ENCODE measurements at regions of chr1 and their contacts with region 1.

Region 1: GRCh38 chr1:12434174-12434573 is 183.8 kb downstream of the DHRS3 start:
- DNase-seq: peak; percentile 93
- ATAC-seq: peak; percentile 21
- H3K4me3 Mint-ChIP-seq: peak overlapping the region; percentile 65
- H3K27ac Mint-ChIP-seq: peak overlapping the region; percentile 96
- H3K4me1 Mint-ChIP-seq: peaks cover 87% of the 10 kb centered on the region
- H3K27me3 Mint-ChIP-seq: peaks cover 2% of the 10 kb centered on the region
- CTCF ChIP-seq: no peak

Region 2: GRCh38 chr1:12415038-12415466 is 19.1 kb before region 1 on chr1:
- CTCF ChIA-PET with region 1: interaction called, 5 read pairs
- POLR2A ChIA-PET with region 1: interaction called, 10 read pairs
- intact Hi-C with region 1: no loop called
- DNase-seq: no peak
- ATAC-seq: peak; percentile 80
- H3K4me3 Mint-ChIP-seq: no peak overlapping the region
- H3K27ac Mint-ChIP-seq: peak overlapping the region; percentile 86
- H3K4me1 Mint-ChIP-seq: peaks cover 42% of the 10 kb centered on the region
- H3K27me3 Mint-ChIP-seq: no peaks in the 10 kb centered on the region
- CTCF ChIP-seq: no peak

Region 3: DNA sequence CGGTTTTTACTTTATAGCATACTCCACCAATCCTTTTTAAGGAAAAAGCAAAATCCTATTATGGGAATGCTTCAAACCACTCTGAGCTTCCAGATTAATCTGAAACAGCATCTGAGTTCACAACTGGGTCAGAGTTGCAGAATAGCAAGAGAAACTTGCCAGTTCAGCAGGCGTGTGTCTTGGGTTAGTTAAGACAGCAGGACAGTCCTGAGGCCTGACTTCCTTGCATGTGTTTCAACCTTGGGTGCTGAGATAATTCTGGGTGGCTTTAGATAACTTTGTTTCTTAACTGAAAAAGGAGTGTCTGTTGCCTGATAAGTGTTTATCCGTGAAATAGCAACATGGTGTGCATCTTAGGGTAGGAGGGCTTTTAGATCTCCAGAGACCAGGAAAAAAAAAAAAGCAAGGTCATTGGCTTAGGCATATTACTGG is 14.6 kb after region 1 on chr1:
- CTCF ChIA-PET with region 1: interaction called, 88 read pairs
- POLR2A ChIA-PET with region 1: interaction called, 141 read pairs
- intact Hi-C with region 1: loop called (anchors 1 kb)
- DNase-seq: no peak
- ATAC-seq: no peak
- H3K4me3 Mint-ChIP-seq: peak overlapping the region; percentile 57
- H3K27ac Mint-ChIP-seq: peak overlapping the region; percentile 95
- H3K4me1 Mint-ChIP-seq: peaks cover 93% of the 10 kb centered on the region
- H3K27me3 Mint-ChIP-seq: no peaks in the 10 kb centered on the region
- CTCF ChIP-seq: no peak

Region 4: GRCh38 chr1:12472798-12473551 is 38.8 kb after region 1 on chr1:
- CTCF ChIA-PET with region 1: interaction called, 6 read pairs
- POLR2A ChIA-PET with region 1: interaction called, 49 read pairs
- intact Hi-C with region 1: loop called (anchors 2 kb)
- DNase-seq: peak; percentile 92
- ATAC-seq: peak; percentile 87
- H3K4me3 Mint-ChIP-seq: peak overlapping the region; percentile 67
- H3K27ac Mint-ChIP-seq: peak overlapping the region; percentile 95
- H3K4me1 Mint-ChIP-seq: peaks cover 90% of the 10 kb centered on the region
- H3K27me3 Mint-ChIP-seq: no peaks in the 10 kb centered on the region
- CTCF ChIP-seq: no peak

Region 5: GRCh38 chr1:12511516-12512468 is 77.6 kb after region 1 on chr1:
- CTCF ChIA-PET with region 1: no interaction called
- POLR2A ChIA-PET with region 1: interaction called, 16 read pairs
- intact Hi-C with region 1: loop called (anchors 2 kb)
- DNase-seq: no peak
- ATAC-seq: no peak
- H3K4me3 Mint-ChIP-seq: peak overlapping the region; percentile 75
- H3K27ac Mint-ChIP-seq: peak overlapping the region; percentile 100
- H3K4me1 Mint-ChIP-seq: peaks cover 60% of the 10 kb centered on the region
- H3K27me3 Mint-ChIP-seq: no peaks in the 10 kb centered on the region
- CTCF ChIP-seq: no peak